B cell (primary cell): ENCODE measurements at regions of chr1 and their contacts with region 1.

Region 1: GRCh38 chr1:205977402-205978014 is 25.7 kb downstream of the RAB7B start:
- DNase-seq: peak; percentile 83
- ATAC-seq: peak; percentile 84
- H3K4me3 ChIP-seq: no peak overlapping the region
- H3K4me3 Mint-ChIP-seq: no peak overlapping the region
- H3K27ac ChIP-seq: no peak overlapping the region
- H3K27ac Mint-ChIP-seq: no peak overlapping the region
- H3K4me1 ChIP-seq: no peaks in the 10 kb centered on the region
- H3K4me1 Mint-ChIP-seq: no peaks in the 10 kb centered on the region
- H3K27me3 ChIP-seq: no peaks in the 10 kb centered on the region
- H3K27me3 Mint-ChIP-seq: peaks cover 2% of the 10 kb centered on the region
- CTCF ChIP-seq: peak; percentile 96

Region 2: DNA sequence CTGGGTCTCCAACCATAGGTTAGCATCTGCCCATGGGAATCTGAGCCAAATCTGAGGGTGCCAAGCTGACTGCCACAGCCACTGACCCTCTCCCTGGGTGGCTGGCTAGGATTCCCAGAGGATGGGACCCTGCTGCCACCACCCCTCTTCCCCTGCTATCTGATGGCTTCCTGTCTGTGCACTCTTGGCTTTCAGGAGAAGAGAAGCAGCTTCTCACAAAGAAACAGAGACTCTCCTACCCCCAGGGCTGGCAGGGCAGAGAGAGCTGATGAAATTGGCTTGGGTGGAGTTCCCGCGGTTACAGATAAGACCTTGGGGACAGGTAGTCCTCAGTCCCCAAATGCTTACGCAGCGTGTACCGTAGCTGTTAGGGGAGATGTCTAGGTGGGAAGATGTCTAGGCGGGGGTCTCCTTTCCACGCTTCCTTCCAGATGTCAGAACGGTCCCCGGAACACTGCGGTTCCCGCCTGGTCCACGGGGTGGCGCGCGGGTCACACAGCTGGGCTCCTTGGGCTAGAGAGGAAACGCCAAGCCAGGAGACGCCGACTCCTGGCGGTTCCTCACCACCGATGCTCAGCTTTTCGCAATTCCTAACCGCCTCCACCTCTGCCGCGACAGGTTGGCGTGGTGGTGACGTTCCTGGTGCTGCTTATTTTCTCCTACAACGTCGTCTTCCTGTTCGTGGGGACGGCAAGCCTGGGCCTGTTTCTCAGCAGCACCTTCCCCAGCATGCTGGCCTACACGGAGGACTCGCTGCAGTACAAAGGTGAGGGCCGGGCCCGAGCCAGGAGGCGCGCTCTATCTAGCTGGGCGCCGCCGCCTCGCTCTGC is 385.8 kb before region 1 on chr1:
- CTCF ChIA-PET with region 1: interaction called, 37 read pairs
- POLR2A ChIA-PET with region 1: no interaction called
- intact Hi-C with region 1: no loop called
- DNase-seq: peak; percentile 90
- ATAC-seq: peak; percentile 89
- H3K4me3 ChIP-seq: peak overlapping the region in 4 of 5 experiments; percentile 51 to 69 (median 60)
- H3K4me3 Mint-ChIP-seq: peak overlapping the region; percentile 87
- H3K27ac ChIP-seq: peak overlapping the region; percentile 59 to 72
- H3K27ac Mint-ChIP-seq: peak overlapping the region; percentile 85
- H3K4me1 ChIP-seq: peaks cover 46 to 54% of the 10 kb centered on the region in 2 donors
- H3K4me1 Mint-ChIP-seq: peaks cover 48% of the 10 kb centered on the region
- H3K27me3 ChIP-seq: no peaks in the 10 kb centered on the region
- H3K27me3 Mint-ChIP-seq: no peaks in the 10 kb centered on the region
- CTCF ChIP-seq: peak; percentile 98

Region 3: GRCh38 chr1:205791568-205792180 is 185.8 kb before region 1 on chr1:
- CTCF ChIA-PET with region 1: interaction called, 434 read pairs
- POLR2A ChIA-PET with region 1: interaction called, 7 read pairs
- intact Hi-C with region 1: loop called (anchors 1 kb)
- DNase-seq: peak; percentile 74
- ATAC-seq: peak; percentile 82
- H3K4me3 ChIP-seq: no peak overlapping the region
- H3K4me3 Mint-ChIP-seq: no peak overlapping the region
- H3K27ac ChIP-seq: no peak overlapping the region
- H3K27ac Mint-ChIP-seq: peak overlapping the region; percentile 42
- H3K4me1 ChIP-seq: peaks cover 5 to 27% of the 10 kb centered on the region in 2 donors
- H3K4me1 Mint-ChIP-seq: peaks cover 27% of the 10 kb centered on the region
- H3K27me3 ChIP-seq: no peaks in the 10 kb centered on the region
- H3K27me3 Mint-ChIP-seq: no peaks in the 10 kb centered on the region
- CTCF ChIP-seq: peak; percentile 82

Region 4: DNA sequence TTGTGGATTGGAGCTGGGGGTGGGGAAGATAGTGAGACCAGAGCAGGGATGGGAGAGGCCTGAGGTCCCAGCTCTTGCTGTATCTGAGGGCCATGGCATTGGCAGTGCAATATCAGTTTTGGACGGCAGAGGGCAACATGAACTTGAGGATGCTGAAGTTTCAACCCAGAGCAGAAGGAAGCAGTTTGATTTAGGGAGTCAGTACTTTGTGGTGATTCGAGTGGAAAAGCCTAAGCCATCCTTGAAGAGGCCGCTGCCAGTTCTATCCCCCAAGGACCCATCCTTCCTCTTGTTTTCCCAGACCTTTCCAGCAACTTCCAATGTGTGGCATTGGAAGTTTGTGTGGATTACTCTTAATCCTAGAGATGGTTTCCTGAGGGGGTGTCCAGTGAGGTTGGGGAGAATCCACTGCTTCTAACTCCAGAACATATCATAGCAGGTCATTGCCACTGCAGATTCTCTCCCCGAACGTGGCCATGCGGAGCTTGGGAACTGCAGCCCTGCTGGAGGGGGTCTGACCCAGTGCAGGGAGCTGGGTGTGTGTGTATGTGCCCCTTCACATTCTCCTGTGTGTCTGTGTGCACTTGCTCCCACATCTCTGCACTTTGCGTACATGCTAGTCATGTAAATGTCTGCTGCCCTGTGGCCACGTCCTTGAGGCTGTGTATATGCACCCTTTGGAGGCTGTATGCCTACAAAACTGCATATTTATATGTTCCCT is 58.3 kb before region 1 on chr1:
- CTCF ChIA-PET with region 1: interaction called, 79 read pairs
- POLR2A ChIA-PET with region 1: no interaction called
- intact Hi-C with region 1: loop called (anchors 1 kb)
- DNase-seq: peak; percentile 80
- ATAC-seq: peak; percentile 71
- H3K4me3 ChIP-seq: no peak overlapping the region
- H3K4me3 Mint-ChIP-seq: no peak overlapping the region
- H3K27ac ChIP-seq: no peak overlapping the region
- H3K27ac Mint-ChIP-seq: no peak overlapping the region
- H3K4me1 ChIP-seq: no peaks in the 10 kb centered on the region
- H3K4me1 Mint-ChIP-seq: peaks cover 2% of the 10 kb centered on the region
- H3K27me3 ChIP-seq: no peaks in the 10 kb centered on the region
- H3K27me3 Mint-ChIP-seq: peaks cover 4% of the 10 kb centered on the region
- CTCF ChIP-seq: peak; percentile 93

Region 5: GRCh38 chr1:206001476-206001888 is 24.0 kb after region 1 on chr1:
- CTCF ChIA-PET with region 1: interaction called, 17 read pairs
- POLR2A ChIA-PET with region 1: no interaction called
- intact Hi-C with region 1: no loop called
- DNase-seq: no peak
- ATAC-seq: no peak
- H3K4me3 ChIP-seq: no peak overlapping the region
- H3K4me3 Mint-ChIP-seq: no peak overlapping the region
- H3K27ac ChIP-seq: no peak overlapping the region
- H3K27ac Mint-ChIP-seq: no peak overlapping the region
- H3K4me1 ChIP-seq: no peaks in the 10 kb centered on the region
- H3K4me1 Mint-ChIP-seq: peaks cover 3% of the 10 kb centered on the region
- H3K27me3 ChIP-seq: no peaks in the 10 kb centered on the region
- H3K27me3 Mint-ChIP-seq: no peaks in the 10 kb centered on the region
- CTCF ChIP-seq: no peak

Region 6: DNA sequence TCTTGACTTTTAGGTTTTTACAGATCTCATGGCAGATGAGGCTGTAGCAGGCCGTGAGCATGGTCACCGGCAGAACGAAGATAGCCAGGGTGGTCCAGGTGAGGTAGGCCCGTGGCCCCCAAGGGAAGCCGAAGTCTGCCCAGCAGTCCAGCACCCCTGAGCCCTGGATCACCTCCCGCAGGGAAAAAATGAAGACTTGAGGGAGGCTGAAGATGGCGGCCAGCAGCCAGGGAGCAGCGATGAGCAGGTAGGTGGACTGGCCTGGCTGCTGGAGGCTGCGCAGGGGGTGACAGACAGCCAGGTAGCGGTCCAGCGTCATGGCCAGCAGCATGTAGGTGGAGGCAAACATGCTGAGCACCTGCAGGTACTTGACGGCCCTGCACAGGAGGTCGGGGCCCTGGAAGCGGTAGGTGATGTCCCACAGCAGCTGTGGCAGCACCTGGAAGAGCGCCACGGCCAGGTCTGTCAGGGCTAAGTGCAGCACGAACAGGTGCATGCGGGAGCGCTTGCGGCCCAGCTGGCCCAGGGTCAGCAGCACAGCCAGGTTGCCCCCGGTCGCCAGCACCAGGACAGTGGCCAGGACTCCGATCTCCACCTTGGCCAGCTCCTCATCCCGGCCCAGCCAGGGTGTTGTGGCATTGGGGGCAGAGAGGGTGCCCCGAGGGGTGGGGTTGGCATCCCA is 138.8 kb after region 1 on chr1:
- CTCF ChIA-PET with region 1: interaction called, 235 read pairs
- POLR2A ChIA-PET with region 1: no interaction called
- intact Hi-C with region 1: no loop called
- DNase-seq: no peak
- ATAC-seq: no peak
- H3K4me3 ChIP-seq: no peak overlapping the region
- H3K4me3 Mint-ChIP-seq: peak overlapping the region; percentile 88
- H3K27ac ChIP-seq: no peak overlapping the region
- H3K27ac Mint-ChIP-seq: peak overlapping the region; percentile 27
- H3K4me1 ChIP-seq: peaks cover 14% of the 10 kb centered on the region in 2 donors
- H3K4me1 Mint-ChIP-seq: peaks cover 19% of the 10 kb centered on the region
- H3K27me3 ChIP-seq: peaks cover 0 to 13% (median 5%) of the 10 kb centered on the region in 4 experiments
- H3K27me3 Mint-ChIP-seq: peaks cover 23% of the 10 kb centered on the region
- CTCF ChIP-seq: no peak

Region 7: GRCh38 chr1:207282058-207282457 is 1304.5 kb after region 1 on chr1:
- CTCF ChIA-PET with region 1: no interaction called
- POLR2A ChIA-PET with region 1: no interaction called
- intact Hi-C with region 1: no loop called
- DNase-seq: no peak
- ATAC-seq: peak; percentile 28
- H3K4me3 ChIP-seq: peak overlapping the region in 1 of 5 experiments; percentile 28
- H3K4me3 Mint-ChIP-seq: peak overlapping the region; percentile 66
- H3K27ac ChIP-seq: peak overlapping the region; percentile 28 to 50
- H3K27ac Mint-ChIP-seq: peak overlapping the region; percentile 48
- H3K4me1 ChIP-seq: peaks cover 38 to 40% of the 10 kb centered on the region in 2 donors
- H3K4me1 Mint-ChIP-seq: peaks cover 47% of the 10 kb centered on the region
- H3K27me3 ChIP-seq: no peaks in the 10 kb centered on the region
- H3K27me3 Mint-ChIP-seq: peaks cover under 1% of the 10 kb centered on the region
- CTCF ChIP-seq: no peak